Activated T-helper 1 cell treated with anti-CD3 and anti-CD28 coated beads, Interleukin-12 subunit alpha, Interleukin-12 subunit beta, Interleukin-2, Interleukin-4 antibody, amounts not matched to agents 30 ng/mL and 10 ng/mL and 1 ng/mL, durations not matched to agents 14 hours and 24 hours and 36 hours (primary cell): ENCODE measurements at regions of chr2 and their contacts with region 1.

Region 1: GRCh38 chr2:118865106-118865505 is 17.7 kb upstream of the EN1 start:
- DNase-seq: no peak
- H3K4me3 Mint-ChIP-seq: no peak overlapping the region
- H3K27ac Mint-ChIP-seq: no peak overlapping the region
- H3K4me1 Mint-ChIP-seq: no peaks in the 10 kb centered on the region
- H3K27me3 Mint-ChIP-seq: peaks cover 31% of the 10 kb centered on the region

Region 2: GRCh38 chr2:118032169-118033013 is 832.7 kb before region 1 on chr2:
- intact Hi-C with region 1: loop called (anchors 1 kb)
- DNase-seq: no peak
- H3K4me3 Mint-ChIP-seq: no peak overlapping the region
- H3K27ac Mint-ChIP-seq: no peak overlapping the region
- H3K4me1 Mint-ChIP-seq: no peaks in the 10 kb centered on the region
- H3K27me3 Mint-ChIP-seq: peaks cover 32% of the 10 kb centered on the region

Region 3: DNA sequence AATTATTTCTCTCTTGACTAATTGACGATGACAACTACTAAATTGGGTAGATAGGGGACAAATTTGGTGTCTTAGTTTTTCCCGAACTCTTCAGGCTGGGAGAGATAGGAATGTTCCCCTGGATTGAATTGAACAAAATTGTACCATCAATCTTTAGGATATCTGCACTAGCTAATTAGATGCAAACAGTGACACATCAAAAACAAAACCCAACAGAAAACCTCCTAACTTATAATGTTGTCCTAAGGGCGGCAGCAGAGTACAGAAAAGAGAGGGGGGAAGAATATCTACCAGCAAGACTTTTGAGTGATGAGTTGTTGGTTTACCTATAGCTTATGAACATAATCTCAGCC is 434.0 kb before region 1 on chr2:
- intact Hi-C with region 1: no loop called
- DNase-seq: no peak
- H3K4me3 Mint-ChIP-seq: no peak overlapping the region
- H3K27ac Mint-ChIP-seq: no peak overlapping the region
- H3K4me1 Mint-ChIP-seq: no peaks in the 10 kb centered on the region
- H3K27me3 Mint-ChIP-seq: no peaks in the 10 kb centered on the region

Region 4: GRCh38 chr2:118889995-118890394 is 24.9 kb after region 1 on chr2:
- intact Hi-C with region 1: no loop called
- DNase-seq: no peak
- H3K4me3 Mint-ChIP-seq: no peak overlapping the region
- H3K27ac Mint-ChIP-seq: no peak overlapping the region
- H3K4me1 Mint-ChIP-seq: no peaks in the 10 kb centered on the region
- H3K27me3 Mint-ChIP-seq: no peaks in the 10 kb centered on the region